Heart left ventricle (tissue), 16 donors: ENCODE measurements at regions of chr17 and their contacts with region 1.

Region 1: GRCh38 chr17:61927200-61928165 is at the start of gene INTS2:
- DNase-seq: peak; percentile 96 to 97 (median 97)
- ATAC-seq: peak; percentile 91 to 99 (median 97)
- H3K4me3 ChIP-seq: peak within 1 kb of the TSS; percentile 59 to 85 (median 76)
- H3K27ac ChIP-seq: peak within 1 kb of the TSS; percentile 43 to 89 (median 82)
- H3K4me1 ChIP-seq: peaks cover 0 to 18% (median 13%) of the 10 kb centered on the region in 12 donors
- H3K27me3 ChIP-seq: no peaks in the 10 kb centered on the region
- CTCF ChIP-seq: peak in 1 of 12 donors; percentile 10
- POLR2A ChIP-seq: peak in 1 of 2 donors; percentile 65
- total RNA-seq, gene INTS2: 6.3 to 16.6 (median 10.3) TPM

Region 2: GRCh38 chr17:61862975-61863800 is 64.3 kb before region 1 on chr17 and contains the start of gene BRIP1:
- intact Hi-C with region 1: loop called in 1 of 10 experiments (anchors 10 kb)
- DNase-seq: peak; percentile 90 to 94 (median 92)
- ATAC-seq: peak; percentile 98 to 100 (median 100)
- H3K4me3 ChIP-seq: peak within 1 kb of the TSS; percentile 55 to 83 (median 70)
- H3K27ac ChIP-seq: peak within 1 kb of the TSS in 11 of 12 donors; percentile 49 to 82 (median 68)
- H3K4me1 ChIP-seq: peaks cover 0 to 15% (median 3%) of the 10 kb centered on the region in 12 donors
- H3K27me3 ChIP-seq: no peaks in the 10 kb centered on the region
- CTCF ChIP-seq: no peak
- POLR2A ChIP-seq: no peak
- total RNA-seq, gene BRIP1: 0.09 to 2.2 (median 0.21) TPM in 6 of 9 donors, not detected in the others

Region 3: GRCh38 chr17:61955621-61956020 is 28.1 kb after region 1 on chr17:
- intact Hi-C with region 1: no loop called
- DNase-seq: no peak
- ATAC-seq: no peak
- H3K4me3 ChIP-seq: no peak overlapping the region
- H3K27ac ChIP-seq: no peak overlapping the region
- H3K4me1 ChIP-seq: no peaks in the 10 kb centered on the region
- H3K27me3 ChIP-seq: no peaks in the 10 kb centered on the region
- CTCF ChIP-seq: no peak
- POLR2A ChIP-seq: no peak

Region 4: DNA sequence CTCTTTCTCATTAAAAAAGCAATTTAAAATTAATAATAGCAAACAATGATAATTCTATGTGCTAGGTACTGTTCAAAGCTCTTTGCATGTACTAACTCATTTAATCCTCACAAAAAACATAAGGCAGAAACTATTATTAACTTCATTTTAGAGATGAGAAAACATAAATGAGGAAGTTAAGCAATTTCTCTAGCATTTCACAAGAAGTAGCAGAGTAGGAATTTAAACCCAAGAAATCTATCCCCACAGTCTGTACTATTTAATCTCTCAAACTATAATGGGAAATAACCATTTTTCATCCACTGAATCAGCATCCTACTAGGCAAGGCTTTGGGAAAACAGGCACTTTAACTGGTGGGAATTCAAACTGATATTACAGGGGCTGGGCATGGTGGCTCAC is 42.5 kb after region 1 on chr17:
- intact Hi-C with region 1: no loop called
- DNase-seq: no peak
- ATAC-seq: no peak
- H3K4me3 ChIP-seq: no peak overlapping the region
- H3K27ac ChIP-seq: no peak overlapping the region
- H3K4me1 ChIP-seq: peaks cover 0 to 10% (median 0%) of the 10 kb centered on the region in 12 donors
- H3K27me3 ChIP-seq: no peaks in the 10 kb centered on the region
- CTCF ChIP-seq: no peak
- POLR2A ChIP-seq: no peak

Region 5: DNA sequence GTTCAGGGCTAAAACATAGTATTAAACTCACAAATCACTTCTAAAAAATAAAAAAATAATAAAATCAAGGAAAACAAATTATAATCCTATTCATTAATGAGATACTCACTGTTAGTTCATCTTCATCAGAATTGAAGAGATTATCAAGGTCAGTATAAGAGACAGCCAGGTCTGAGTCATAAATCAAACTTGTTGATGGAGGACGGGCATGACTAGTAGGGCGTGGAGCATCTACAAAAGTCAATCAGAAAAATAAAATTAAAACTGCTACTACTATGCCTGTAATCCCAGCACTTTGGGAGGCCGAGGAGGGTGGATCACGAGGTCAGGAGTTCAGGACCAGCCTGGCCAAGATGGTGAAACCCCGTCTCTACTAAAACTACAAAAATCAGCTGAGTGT is 59.4 kb after region 1 on chr17:
- intact Hi-C with region 1: no loop called
- DNase-seq: no peak
- ATAC-seq: no peak
- H3K4me3 ChIP-seq: no peak overlapping the region
- H3K27ac ChIP-seq: no peak overlapping the region
- H3K4me1 ChIP-seq: peaks cover 0 to 11% (median 0%) of the 10 kb centered on the region in 12 donors
- H3K27me3 ChIP-seq: no peaks in the 10 kb centered on the region
- CTCF ChIP-seq: no peak
- POLR2A ChIP-seq: no peak

Region 6: GRCh38 chr17:62065598-62066468 is 138.3 kb after region 1 on chr17:
- intact Hi-C with region 1: loop called in 6 of 10 experiments (anchors 2 to 5 kb)
- DNase-seq: peak; percentile 99 to 100 (median 99)
- ATAC-seq: peak; percentile 99 to 100 (median 100)
- H3K4me3 ChIP-seq: peak overlapping the region; percentile 79 to 98 (median 95)
- H3K27ac ChIP-seq: peak overlapping the region; percentile 93 to 100 (median 99)
- H3K4me1 ChIP-seq: peaks cover 9 to 36% (median 24%) of the 10 kb centered on the region in 12 donors
- H3K27me3 ChIP-seq: no peaks in the 10 kb centered on the region
- CTCF ChIP-seq: peak; percentile 87 to 98 (median 92)
- POLR2A ChIP-seq: peak; percentile 27 to 80